Activated CD4-positive, alpha-beta T cell treated with anti-CD3 and anti-CD28 coated beads for 36 hours (primary cell): ENCODE measurements at regions of chr19 and their contacts with region 1.

Region 1: DNA sequence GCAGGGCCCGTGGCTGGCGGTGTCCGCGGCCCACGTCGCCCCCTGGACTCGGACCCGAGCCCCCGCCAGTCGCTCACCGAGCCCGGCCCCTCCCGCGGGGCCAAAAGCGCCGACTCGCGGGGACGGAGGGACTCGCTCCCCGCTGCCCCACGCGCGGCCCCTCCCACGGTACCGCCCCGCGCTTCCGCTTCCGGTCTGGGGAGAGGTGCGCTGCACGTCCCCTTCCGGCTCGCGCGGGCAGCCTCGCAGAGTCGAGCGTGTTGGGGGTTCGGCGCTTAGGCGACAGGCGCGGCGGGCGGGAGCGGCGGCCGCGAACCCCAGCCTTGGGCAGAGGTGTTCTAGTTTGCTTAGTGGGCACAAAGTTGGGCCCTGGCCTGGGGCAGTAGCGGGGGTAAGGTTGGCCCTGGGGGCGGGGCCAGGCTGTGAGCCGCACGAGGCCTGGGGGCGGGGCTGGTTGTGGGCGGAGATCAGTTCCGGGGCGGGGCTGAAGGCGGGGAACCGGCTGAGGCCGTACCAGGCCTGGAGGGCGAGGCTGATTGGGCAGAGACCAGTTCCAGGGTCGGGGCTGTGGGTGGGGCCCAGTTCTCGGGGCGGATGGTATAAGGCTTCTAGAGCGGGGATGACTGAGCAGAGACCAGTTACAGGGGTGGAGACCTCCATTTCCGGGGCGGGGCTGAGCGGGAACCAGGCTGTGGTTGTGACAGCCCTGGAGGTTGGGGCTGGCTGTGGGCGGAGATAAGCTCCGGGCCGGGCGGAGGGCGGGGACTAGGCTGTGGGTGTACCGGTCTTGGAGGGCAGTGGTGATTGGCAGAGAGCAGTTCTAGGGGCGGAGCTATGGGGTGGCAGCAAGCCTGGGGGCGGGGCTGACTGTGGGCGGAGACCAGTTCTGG is at the starts of genes MBD3L1 and ZNF558:
- DNase-seq: peak; percentile 100
- ATAC-seq: peak; percentile 95
- H3K4me3 Mint-ChIP-seq: peak within 1 kb of the TSS; percentile 79
- H3K27ac Mint-ChIP-seq: peak within 1 kb of the TSS; percentile 90
- H3K4me1 Mint-ChIP-seq: peaks cover 19% of the 10 kb centered on the region
- H3K27me3 Mint-ChIP-seq: no peaks in the 10 kb centered on the region
- total RNA-seq, gene MBD3L1: not detected
- total RNA-seq, gene ZNF558: 31.8 to 33.5 TPM

Region 2: DNA sequence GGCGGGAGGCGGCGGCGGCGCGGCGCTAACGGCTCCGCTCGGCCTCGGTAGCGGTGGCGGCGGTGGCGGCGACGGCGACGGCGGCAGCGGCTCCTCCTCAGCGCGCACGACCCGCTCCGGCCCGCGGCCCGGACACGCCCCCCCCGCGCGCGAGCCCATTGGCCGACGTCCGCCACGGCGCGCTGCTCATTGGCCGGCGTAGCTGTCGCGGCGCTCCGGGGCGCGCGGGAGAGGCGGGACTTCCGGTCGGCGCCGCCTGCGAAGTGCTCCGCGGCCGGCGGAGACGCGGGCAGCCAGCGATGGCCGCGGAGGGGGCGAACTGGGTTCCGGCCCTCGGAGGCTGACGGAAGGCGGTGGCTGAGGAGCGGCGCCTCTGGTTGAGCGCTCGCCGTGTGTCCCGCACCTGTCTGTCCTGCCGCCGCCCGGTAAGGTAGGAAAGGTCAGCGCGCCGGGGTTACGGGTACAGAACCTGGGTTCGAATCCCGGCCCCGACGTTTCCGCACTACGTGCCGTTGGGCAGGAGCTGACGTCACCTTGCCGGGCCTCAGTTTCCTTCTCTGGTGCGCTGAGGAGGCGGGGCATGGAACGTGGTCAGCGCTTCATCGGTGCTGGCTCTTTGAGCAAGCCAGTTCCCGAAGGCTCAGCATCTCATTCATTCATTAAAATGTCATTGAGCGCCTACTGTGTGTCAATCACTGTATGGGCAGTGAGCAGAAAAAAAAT is 826.7 kb before region 1 on chr19 and contains the start of gene ELAVL1:
- CTCF ChIA-PET with region 1: no interaction called
- POLR2A ChIA-PET with region 1: no interaction called
- intact Hi-C with region 1: loop called in 1 of 2 experiments (anchors 5 kb)
- DNase-seq: peak; percentile 95
- ATAC-seq: peak; percentile 93
- H3K4me3 Mint-ChIP-seq: peak within 1 kb of the TSS; percentile 95
- H3K27ac Mint-ChIP-seq: peak within 1 kb of the TSS; percentile 94
- H3K4me1 Mint-ChIP-seq: peaks cover 36% of the 10 kb centered on the region
- H3K27me3 Mint-ChIP-seq: no peaks in the 10 kb centered on the region
- total RNA-seq, gene ELAVL1: 149 to 184 TPM

Region 3: GRCh38 chr19:8592231-8593009 is 240.0 kb before region 1 on chr19:
- CTCF ChIA-PET with region 1: no interaction called
- POLR2A ChIA-PET with region 1: no interaction called
- intact Hi-C with region 1: loop called (anchors 1 kb)
- DNase-seq: peak; percentile 99
- ATAC-seq: peak; percentile 94
- H3K4me3 Mint-ChIP-seq: peak overlapping the region; percentile 70
- H3K27ac Mint-ChIP-seq: no peak overlapping the region
- H3K4me1 Mint-ChIP-seq: peaks cover 15% of the 10 kb centered on the region
- H3K27me3 Mint-ChIP-seq: no peaks in the 10 kb centered on the region

Region 4: DNA sequence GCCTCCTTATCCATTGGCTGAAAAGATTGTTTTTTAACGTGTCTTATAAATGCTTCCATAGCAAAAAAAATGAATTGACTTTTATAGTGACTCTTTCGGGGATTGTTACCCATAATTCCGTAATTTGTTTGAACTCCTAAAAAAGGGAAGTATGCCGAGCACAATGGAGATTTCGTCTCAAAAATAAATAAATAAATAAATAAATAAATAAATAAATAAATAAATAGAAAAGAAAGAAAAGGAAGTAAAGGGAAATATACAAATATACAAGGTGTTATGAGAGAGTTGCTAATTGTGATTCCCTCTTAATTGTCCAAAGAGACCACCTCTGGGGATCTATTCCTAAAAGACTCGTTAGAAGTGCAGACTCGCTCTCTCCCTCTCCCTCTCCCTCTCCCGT is 94.0 kb before region 1 on chr19:
- CTCF ChIA-PET with region 1: no interaction called
- POLR2A ChIA-PET with region 1: no interaction called
- intact Hi-C with region 1: no loop called
- DNase-seq: no peak
- ATAC-seq: no peak
- H3K4me3 Mint-ChIP-seq: no peak overlapping the region
- H3K27ac Mint-ChIP-seq: no peak overlapping the region
- H3K4me1 Mint-ChIP-seq: no peaks in the 10 kb centered on the region
- H3K27me3 Mint-ChIP-seq: peaks cover 1% of the 10 kb centered on the region

Region 5: DNA sequence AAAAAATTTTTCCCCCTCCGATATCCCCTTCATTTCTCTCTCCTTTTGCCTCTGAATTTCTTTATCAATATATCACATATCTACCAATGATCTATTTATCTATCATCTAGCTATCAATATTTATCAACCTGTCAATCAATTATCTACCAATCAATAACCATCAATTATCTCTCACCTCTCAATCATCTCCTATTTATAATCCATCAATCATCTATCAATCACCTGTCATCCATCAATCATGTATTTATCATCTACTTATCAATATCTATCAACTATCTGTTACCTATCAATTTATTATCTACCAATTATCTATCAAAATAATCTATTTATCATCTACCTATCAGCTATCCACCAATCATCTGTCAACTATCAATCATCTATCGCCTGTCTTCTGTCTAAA is 16.9 kb after region 1 on chr19:
- CTCF ChIA-PET with region 1: no interaction called
- POLR2A ChIA-PET with region 1: no interaction called
- intact Hi-C with region 1: no loop called
- DNase-seq: no peak
- ATAC-seq: no peak
- H3K4me3 Mint-ChIP-seq: no peak overlapping the region
- H3K27ac Mint-ChIP-seq: no peak overlapping the region
- H3K4me1 Mint-ChIP-seq: no peaks in the 10 kb centered on the region
- H3K27me3 Mint-ChIP-seq: peaks cover 16% of the 10 kb centered on the region

Region 6: GRCh38 chr19:9309139-9309973 is 477.0 kb after region 1 on chr19 and contains the start of gene ZNF699:
- CTCF ChIA-PET with region 1: no interaction called
- POLR2A ChIA-PET with region 1: interaction called, 3 read pairs
- intact Hi-C with region 1: loop called in 1 of 2 experiments (anchors 1 kb)
- DNase-seq: peak; percentile 100
- ATAC-seq: peak; percentile 90
- H3K4me3 Mint-ChIP-seq: peak within 1 kb of the TSS; percentile 97
- H3K27ac Mint-ChIP-seq: peak within 1 kb of the TSS; percentile 97
- H3K4me1 Mint-ChIP-seq: peaks cover 13% of the 10 kb centered on the region
- H3K27me3 Mint-ChIP-seq: no peaks in the 10 kb centered on the region
- total RNA-seq, gene ZNF699: 6.7 to 7.1 TPM

Region 7: GRCh38 chr19:9584073-9584833 is 751.9 kb after region 1 on chr19 and contains the start of gene ZNF121:
- CTCF ChIA-PET with region 1: no interaction called
- POLR2A ChIA-PET with region 1: no interaction called
- intact Hi-C with region 1: loop called in 1 of 2 experiments (anchors 1 kb)
- DNase-seq: peak; percentile 91
- ATAC-seq: peak; percentile 82
- H3K4me3 Mint-ChIP-seq: peak within 1 kb of the TSS; percentile 93
- H3K27ac Mint-ChIP-seq: peak within 1 kb of the TSS; percentile 94
- H3K4me1 Mint-ChIP-seq: peaks cover 29% of the 10 kb centered on the region
- H3K27me3 Mint-ChIP-seq: peaks cover 4% of the 10 kb centered on the region
- total RNA-seq, gene ZNF121: 71.4 to 75.3 TPM

Region 8: DNA sequence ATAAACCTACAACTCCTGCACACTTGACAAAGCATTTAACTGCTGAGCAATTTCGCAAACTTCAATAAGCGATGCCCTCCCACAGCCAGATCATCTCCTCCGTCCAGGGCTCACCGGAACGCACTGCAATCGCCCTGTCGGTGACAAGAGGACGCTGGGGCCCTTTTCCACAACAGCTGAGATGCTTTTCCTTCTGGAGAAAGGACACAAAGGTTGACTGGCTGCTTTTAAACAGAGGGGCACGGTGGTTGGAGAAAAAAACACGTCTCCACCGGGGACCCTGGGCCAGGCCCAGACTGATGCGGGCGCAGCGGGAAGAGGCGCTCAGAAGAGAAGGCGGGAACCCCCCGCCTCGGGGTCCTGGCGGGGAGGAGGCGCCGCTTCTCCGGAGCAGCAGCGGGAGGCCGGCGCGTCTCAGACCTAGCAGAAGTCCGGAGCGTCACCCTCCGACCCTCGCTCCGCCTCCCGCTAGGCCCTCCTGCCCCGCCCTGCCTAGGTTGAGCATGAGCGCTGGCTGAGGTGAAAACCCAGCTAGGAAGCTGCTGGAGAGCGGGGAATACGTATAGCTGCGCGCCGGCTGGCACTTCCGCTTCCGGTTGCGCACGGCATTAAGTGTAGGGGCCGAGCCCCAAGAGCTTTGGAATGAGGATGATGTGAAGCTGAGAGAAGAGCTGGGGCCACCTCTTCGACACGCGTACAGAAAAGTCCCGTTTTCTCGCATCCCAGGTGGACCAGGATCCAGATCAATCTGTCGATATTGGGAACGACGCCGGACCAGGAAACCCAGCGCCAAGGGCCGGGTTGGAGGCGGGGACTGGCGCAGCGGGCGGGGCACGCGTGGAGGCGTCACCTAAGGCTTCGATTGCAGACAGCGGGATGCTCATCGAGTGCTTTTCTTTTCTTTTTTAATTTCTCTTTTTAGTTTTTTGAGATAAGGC is 936.1 kb after region 1 on chr19 and contains the start of gene ZNF846:
- CTCF ChIA-PET with region 1: no interaction called
- POLR2A ChIA-PET with region 1: interaction called, 4 read pairs
- intact Hi-C with region 1: loop called (anchors 1 to 5 kb)
- DNase-seq: peak; percentile 96
- ATAC-seq: peak; percentile 98
- H3K4me3 Mint-ChIP-seq: peak within 1 kb of the TSS; percentile 84
- H3K27ac Mint-ChIP-seq: peak within 1 kb of the TSS; percentile 90
- H3K4me1 Mint-ChIP-seq: peaks cover 7% of the 10 kb centered on the region
- H3K27me3 Mint-ChIP-seq: no peaks in the 10 kb centered on the region
- total RNA-seq, gene ZNF846: 5.3 to 6.4 TPM

Region 9: DNA sequence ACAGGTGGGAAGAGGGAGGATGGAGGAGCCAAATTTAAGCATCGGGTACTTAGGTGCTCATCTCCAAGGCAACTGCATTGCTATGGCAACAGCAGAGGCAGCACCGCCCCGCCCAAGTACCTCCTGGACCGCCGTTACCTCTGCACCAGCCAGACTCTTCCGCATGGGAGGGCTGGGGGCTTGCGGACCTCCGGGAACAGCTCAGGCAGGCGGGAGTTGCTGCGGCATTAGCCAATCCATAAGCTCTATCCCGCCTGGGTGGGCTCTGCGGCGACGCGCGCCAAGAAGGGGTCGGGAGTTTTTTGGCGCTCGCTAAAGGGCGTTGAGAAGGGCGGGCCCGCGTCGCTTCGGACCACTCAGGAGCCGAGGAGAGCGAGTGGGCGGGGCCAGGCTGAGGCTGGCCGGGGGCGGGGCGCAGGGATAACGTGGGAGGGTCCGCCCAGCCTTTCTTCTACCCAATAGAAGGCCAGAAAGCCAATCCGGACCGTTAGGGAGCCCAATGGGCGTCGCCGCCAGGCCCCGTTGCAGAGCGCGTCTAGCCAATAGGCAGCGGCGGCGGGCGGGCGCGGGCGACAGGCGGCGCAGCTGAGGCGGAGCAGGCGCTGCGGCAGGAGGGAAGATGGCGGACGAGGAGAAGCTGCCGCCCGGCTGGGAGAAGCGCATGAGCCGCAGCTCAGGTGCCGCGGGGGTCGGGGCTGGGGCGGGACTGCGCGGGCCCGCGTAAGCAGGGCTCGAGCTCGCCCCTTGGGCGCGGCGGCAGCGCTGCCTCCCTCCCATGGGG is 1002.5 kb after region 1 on chr19 and contains the start of gene PIN1:
- CTCF ChIA-PET with region 1: no interaction called
- POLR2A ChIA-PET with region 1: no interaction called
- intact Hi-C with region 1: loop called in 1 of 2 experiments (anchors 1 kb)
- DNase-seq: peak; percentile 100
- ATAC-seq: peak; percentile 99
- H3K4me3 Mint-ChIP-seq: peak within 1 kb of the TSS; percentile 86
- H3K27ac Mint-ChIP-seq: peak within 1 kb of the TSS; percentile 88
- H3K4me1 Mint-ChIP-seq: peaks cover 20% of the 10 kb centered on the region
- H3K27me3 Mint-ChIP-seq: no peaks in the 10 kb centered on the region
- total RNA-seq, gene PIN1: 70.4 to 74.2 TPM